ENCODE measurements at regions of chr5 and their contacts with region 1.

Region 1: GRCh38 chr5:112551419-112552032 is 132.4 kb upstream of the EPB41L4A start:
- DNase-seq: peak in 2 of 4 donors; percentile 55 to 78
- ATAC-seq: peak; percentile 75
- H3K4me3 ChIP-seq: no peak overlapping the region
- H3K27ac ChIP-seq: no peak overlapping the region
- H3K4me1 ChIP-seq: no peaks in the 10 kb centered on the region
- H3K27me3 ChIP-seq: no peaks in the 10 kb centered on the region
- CTCF ChIP-seq: peak; percentile 63 to 73

Region 2: DNA sequence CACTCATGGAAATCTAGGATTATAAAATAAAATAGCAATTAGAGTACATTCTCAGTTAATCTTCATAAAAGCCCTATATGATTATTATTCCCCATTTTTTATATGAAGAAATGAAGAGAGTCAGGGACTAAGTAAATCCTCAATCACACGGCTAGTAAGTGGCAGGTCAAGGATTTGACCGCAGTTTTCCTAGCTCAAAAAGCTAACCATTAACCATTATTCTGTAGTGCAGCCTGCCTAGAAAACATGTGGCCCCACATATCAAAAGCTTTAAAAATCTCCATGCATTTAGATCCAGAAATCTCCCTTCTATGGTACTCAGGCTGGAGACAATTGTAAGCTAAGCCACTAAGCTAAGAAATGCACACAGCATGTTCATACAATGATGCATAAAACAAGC is 153.8 kb before region 1 on chr5:
- intact Hi-C with region 1: no loop called
- DNase-seq: no peak
- ATAC-seq: no peak
- H3K4me3 ChIP-seq: no peak overlapping the region
- H3K27ac ChIP-seq: no peak overlapping the region
- H3K4me1 ChIP-seq: no peaks in the 10 kb centered on the region
- H3K27me3 ChIP-seq: no peaks in the 10 kb centered on the region
- CTCF ChIP-seq: no peak

Region 3: GRCh38 chr5:112757468-112758208 is 206.1 kb after region 1 on chr5:
- intact Hi-C with region 1: loop called in 1 of 2 experiments (anchors 5 kb)
- DNase-seq: peak in 2 of 4 donors; percentile 44 to 68
- ATAC-seq: peak; percentile 81
- H3K4me3 ChIP-seq: no peak overlapping the region
- H3K27ac ChIP-seq: no peak overlapping the region
- H3K4me1 ChIP-seq: peaks cover 0 to 8% of the 10 kb centered on the region in 2 donors
- H3K27me3 ChIP-seq: no peaks in the 10 kb centered on the region
- CTCF ChIP-seq: peak; percentile 71 to 76

Region 4: GRCh38 chr5:112848116-112848811 is 296.7 kb after region 1 on chr5:
- intact Hi-C with region 1: loop called in 1 of 2 experiments (anchors 10 kb)
- DNase-seq: peak in 2 of 4 donors; percentile 22 to 55
- ATAC-seq: peak; percentile 98
- H3K4me3 ChIP-seq: no peak overlapping the region
- H3K27ac ChIP-seq: no peak overlapping the region
- H3K4me1 ChIP-seq: peaks cover 0 to 7% of the 10 kb centered on the region in 2 donors
- H3K27me3 ChIP-seq: peaks cover 0 to 6% of the 10 kb centered on the region in 2 donors
- CTCF ChIP-seq: peak; percentile 43 to 70